ENCODE measurements at regions of chr10 and their contacts with region 1.

Region 1: GRCh38 chr10:51599647-51600046 is 99.7 kb downstream of the CSTF2T start:
- DNase-seq: no peak
- ATAC-seq: no peak
- H3K4me3 Mint-ChIP-seq: no peak overlapping the region
- H3K27ac Mint-ChIP-seq: no peak overlapping the region
- H3K4me1 Mint-ChIP-seq: no peaks in the 10 kb centered on the region
- H3K27me3 Mint-ChIP-seq: no peaks in the 10 kb centered on the region

Region 2: GRCh38 chr10:51653025-51653424 is 53.4 kb after region 1 on chr10:
- CTCF ChIA-PET with region 1: no interaction called
- POLR2A ChIA-PET with region 1: no interaction called
- intact Hi-C with region 1: loop called in 1 of 2 experiments (anchors 10 kb)
- DNase-seq: no peak
- ATAC-seq: no peak
- H3K4me3 Mint-ChIP-seq: no peak overlapping the region
- H3K27ac Mint-ChIP-seq: no peak overlapping the region
- H3K4me1 Mint-ChIP-seq: no peaks in the 10 kb centered on the region
- H3K27me3 Mint-ChIP-seq: peaks cover 5% of the 10 kb centered on the region

Region 3: DNA sequence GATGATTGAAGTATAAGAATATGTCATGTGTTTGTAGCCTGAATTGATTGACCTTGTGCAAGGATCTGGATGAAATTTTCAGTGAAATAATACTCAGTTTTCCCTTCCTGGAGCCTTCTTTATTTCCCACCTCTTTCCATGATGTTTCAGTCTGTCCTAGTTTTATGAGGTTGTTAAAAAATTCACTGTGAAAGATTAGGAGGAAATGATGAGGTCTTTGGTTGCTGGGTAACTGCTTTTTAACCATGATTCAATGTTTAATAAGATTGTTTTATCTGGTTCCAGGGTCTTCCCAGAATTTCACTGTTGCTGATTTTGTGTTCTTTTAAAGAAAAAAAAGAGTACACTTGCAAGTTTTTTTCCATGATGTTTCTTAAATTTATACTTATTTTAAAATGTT is 951.4 kb after region 1 on chr10:
- CTCF ChIA-PET with region 1: no interaction called
- POLR2A ChIA-PET with region 1: no interaction called
- intact Hi-C with region 1: no loop called
- DNase-seq: no peak
- ATAC-seq: no peak
- H3K4me3 Mint-ChIP-seq: no peak overlapping the region
- H3K27ac Mint-ChIP-seq: no peak overlapping the region
- H3K4me1 Mint-ChIP-seq: no peaks in the 10 kb centered on the region
- H3K27me3 Mint-ChIP-seq: no peaks in the 10 kb centered on the region

Measured in activated CD4-positive, alpha-beta T cell treated with anti-CD3 and anti-CD28 coated beads for 36 hours (primary cell).